Prostate gland (tissue), 2 donors: ENCODE measurements at regions of chr18 and their contacts with region 1.

Region 1: GRCh38 chr18:27605107-27605834 is 420.2 kb upstream of the CHST9 start:
- DNase-seq: peak; percentile 52
- H3K4me3 ChIP-seq: no peak overlapping the region
- H3K27ac ChIP-seq: no peak overlapping the region
- H3K4me1 ChIP-seq: no peaks in the 10 kb centered on the region
- H3K27me3 ChIP-seq: no peaks in the 10 kb centered on the region
- CTCF ChIP-seq: peak in 3 of 4 experiments; percentile 65 to 70 (median 66)
- POLR2A ChIP-seq: no peak

Region 2: GRCh38 chr18:27413495-27414401 is 191.5 kb before region 1 on chr18:
- intact Hi-C with region 1: no loop called
- DNase-seq: no peak
- H3K4me3 ChIP-seq: no peak overlapping the region
- H3K27ac ChIP-seq: no peak overlapping the region
- H3K4me1 ChIP-seq: no peaks in the 10 kb centered on the region
- H3K27me3 ChIP-seq: no peaks in the 10 kb centered on the region
- CTCF ChIP-seq: no peak
- POLR2A ChIP-seq: no peak

Region 3: DNA sequence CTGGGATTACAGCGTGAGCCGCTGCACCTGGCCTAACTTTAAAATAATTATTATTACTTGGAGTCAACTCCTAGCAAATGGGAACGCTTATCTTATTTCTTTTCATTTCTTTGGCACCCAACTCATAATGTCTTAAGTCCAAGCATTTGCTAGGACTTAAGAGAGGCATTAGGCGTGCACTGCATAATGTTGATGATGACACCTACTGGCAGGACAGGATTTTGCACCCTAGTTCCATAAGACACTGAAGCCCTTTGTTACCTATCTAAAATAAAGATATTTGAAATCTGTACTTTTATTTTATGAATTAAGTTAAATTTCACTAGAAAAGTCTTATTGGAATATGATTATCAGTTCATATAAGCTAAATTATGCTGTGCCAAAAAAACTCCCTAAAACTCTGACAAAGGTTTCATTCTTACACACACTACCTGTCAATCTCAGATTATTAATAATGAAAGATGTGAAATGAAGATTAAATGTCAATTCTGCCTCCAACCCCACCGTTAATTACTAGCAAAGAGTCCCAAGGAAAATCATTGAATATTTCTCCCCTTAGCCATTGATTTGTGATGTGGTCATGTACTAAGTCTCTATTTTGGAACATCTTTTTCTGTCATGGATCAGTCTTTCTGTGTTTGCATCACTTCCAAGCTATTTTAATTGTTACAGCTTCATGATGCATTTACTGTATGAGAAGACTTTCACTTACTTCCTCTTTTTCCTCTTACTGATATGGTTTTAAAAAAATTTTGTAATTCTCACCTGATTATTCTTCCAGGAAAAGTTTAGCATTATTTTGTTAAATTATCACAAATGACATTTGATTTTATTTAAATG is 584.3 kb after region 1 on chr18:
- intact Hi-C with region 1: loop called (anchors 10 kb)
- DNase-seq: peak; percentile 29
- H3K4me3 ChIP-seq: no peak overlapping the region
- H3K27ac ChIP-seq: no peak overlapping the region
- H3K4me1 ChIP-seq: no peaks in the 10 kb centered on the region
- H3K27me3 ChIP-seq: no peaks in the 10 kb centered on the region
- CTCF ChIP-seq: peak in 3 of 4 experiments; percentile 45 to 56 (median 55)
- POLR2A ChIP-seq: no peak